ENCODE measurements at regions of chr6 and their contacts with region 1.

Region 1: DNA sequence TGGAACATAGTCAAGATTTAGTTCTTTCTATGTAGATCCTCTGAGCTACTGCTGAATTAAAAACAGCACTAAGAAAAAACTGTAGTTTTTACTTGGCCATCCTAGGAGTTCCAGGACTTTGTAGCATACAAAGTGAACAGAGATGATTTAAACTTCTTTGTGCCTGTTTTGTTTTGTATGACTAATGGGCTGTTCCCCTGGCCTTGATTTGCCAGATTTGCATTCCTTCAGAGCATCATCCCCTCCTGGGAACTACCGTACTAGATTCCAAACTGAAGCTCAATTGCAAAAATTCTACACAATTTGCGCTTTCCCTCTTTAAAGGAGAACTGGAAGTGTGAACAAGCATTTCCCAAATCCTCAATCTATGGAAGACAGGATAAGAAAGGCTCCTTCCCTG is 23.1 kb downstream of the ACOT13 start:
- DNase-seq: no peak
- H3K4me3 ChIP-seq: no peak overlapping the region
- H3K27ac ChIP-seq: no peak overlapping the region
- H3K4me1 ChIP-seq: no peaks in the 10 kb centered on the region
- H3K27me3 ChIP-seq: no peaks in the 10 kb centered on the region
- CTCF ChIP-seq: no peak

Region 2: GRCh38 chr6:24431045-24431451 is 258.9 kb before region 1 on chr6:
- CTCF ChIA-PET with region 1: no interaction called
- dilution Hi-C with region 1: no loop called
- in situ Hi-C with region 1: loop called in 1 of 2 experiments (anchors 25 kb)
- intact Hi-C with region 1: loop called (anchors 1 kb)
- DNase-seq: peak; percentile 20
- H3K4me3 ChIP-seq: no peak overlapping the region
- H3K27ac ChIP-seq: no peak overlapping the region
- H3K4me1 ChIP-seq: no peaks in the 10 kb centered on the region
- H3K27me3 ChIP-seq: no peaks in the 10 kb centered on the region
- CTCF ChIP-seq: peak; percentile 56 to 66

Region 3: GRCh38 chr6:24589334-24589733 is 100.6 kb before region 1 on chr6:
- CTCF ChIA-PET with region 1: no interaction called
- dilution Hi-C with region 1: no loop called
- in situ Hi-C with region 1: loop called (anchors 5 kb)
- intact Hi-C with region 1: no loop called
- DNase-seq: no peak
- H3K4me3 ChIP-seq: no peak overlapping the region
- H3K27ac ChIP-seq: no peak overlapping the region
- H3K4me1 ChIP-seq: no peaks in the 10 kb centered on the region
- H3K27me3 ChIP-seq: no peaks in the 10 kb centered on the region
- CTCF ChIP-seq: no peak